Ascending aorta (tissue), 2 donors: ENCODE measurements at regions of chr14 and their contacts with region 1.

Region 1: DNA sequence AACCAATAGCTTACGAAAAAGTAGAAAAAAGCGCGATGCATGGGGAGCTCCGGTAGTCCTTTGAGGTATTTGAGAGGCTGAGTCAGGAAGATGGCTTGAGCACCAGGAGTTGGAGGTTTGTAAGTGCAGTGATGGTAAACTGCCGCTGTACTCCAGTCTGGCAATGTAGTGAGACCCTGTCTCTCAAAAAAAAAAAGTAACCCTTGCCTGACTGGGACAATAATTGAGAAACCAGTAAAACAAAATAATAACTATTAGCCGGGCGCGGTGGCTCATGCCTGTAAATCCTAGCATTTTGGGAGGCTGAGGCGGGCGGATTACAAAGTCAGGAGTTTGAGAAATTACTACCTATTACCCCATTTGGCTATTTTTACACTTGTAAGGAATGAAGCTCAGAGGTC is 632 bp upstream of the ACOT2 start:
- DNase-seq: no peak
- H3K4me3 ChIP-seq: peak overlapping the region; percentile 80 to 83
- H3K27ac ChIP-seq: peak overlapping the region; percentile 91 to 96
- H3K4me1 ChIP-seq: peaks cover 0 to 26% of the 10 kb centered on the region in 2 donors
- H3K27me3 ChIP-seq: no peaks in the 10 kb centered on the region
- CTCF ChIP-seq: peak in 1 of 3 experiments; percentile 7

Region 2: GRCh38 chr14:73503648-73504047 is 64.7 kb before region 1 on chr14:
- intact Hi-C with region 1: loop called (anchors 2 kb)
- DNase-seq: no peak
- H3K4me3 ChIP-seq: no peak overlapping the region
- H3K27ac ChIP-seq: no peak overlapping the region
- H3K4me1 ChIP-seq: no peaks in the 10 kb centered on the region
- H3K27me3 ChIP-seq: no peaks in the 10 kb centered on the region
- CTCF ChIP-seq: no peak

Region 3: DNA sequence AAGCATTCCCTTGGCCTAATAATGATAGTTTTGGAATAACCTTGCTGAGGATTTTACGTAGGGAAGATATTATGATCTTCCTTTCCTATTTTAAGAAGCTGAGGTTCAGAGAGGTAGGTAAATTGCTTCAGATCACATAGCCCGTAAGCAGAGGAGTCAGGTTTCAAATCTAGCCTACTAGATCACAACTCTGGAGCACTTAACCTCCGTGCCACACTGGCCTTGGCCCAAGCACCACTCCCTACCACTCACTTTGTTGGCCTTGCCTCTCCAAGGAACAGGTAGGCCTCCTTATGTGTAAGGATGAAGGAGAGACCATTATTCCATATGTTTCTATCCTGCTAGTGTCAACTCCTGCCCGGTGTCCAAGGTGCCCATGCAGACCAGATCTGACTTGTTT is 43.9 kb before region 1 on chr14:
- intact Hi-C with region 1: loop called (anchors 5 kb)
- DNase-seq: no peak
- H3K4me3 ChIP-seq: no peak overlapping the region
- H3K27ac ChIP-seq: no peak overlapping the region
- H3K4me1 ChIP-seq: no peaks in the 10 kb centered on the region
- H3K27me3 ChIP-seq: no peaks in the 10 kb centered on the region
- CTCF ChIP-seq: no peak

Region 4: DNA sequence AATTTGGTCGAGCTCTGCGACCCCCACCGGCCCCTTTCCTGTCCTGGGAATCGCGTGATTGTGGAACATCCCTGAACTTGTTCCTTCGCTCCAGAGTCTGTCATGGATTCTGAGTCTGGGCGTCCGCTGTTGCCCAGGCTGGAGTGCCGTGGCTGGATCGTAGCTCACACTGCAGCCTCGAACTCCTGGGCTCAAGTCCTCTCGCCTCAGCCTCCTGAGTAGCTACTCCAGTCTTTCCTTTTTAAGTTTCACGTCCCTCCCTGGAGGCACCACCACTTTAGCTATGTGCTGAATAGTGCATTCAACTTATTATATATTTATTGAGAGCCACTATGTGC is 44.6 kb after region 1 on chr14:
- intact Hi-C with region 1: loop called (anchors 2 kb)
- DNase-seq: no peak
- H3K4me3 ChIP-seq: peak overlapping the region; percentile 73 to 80
- H3K27ac ChIP-seq: peak overlapping the region; percentile 85 to 86
- H3K4me1 ChIP-seq: no peaks in the 10 kb centered on the region
- H3K27me3 ChIP-seq: no peaks in the 10 kb centered on the region
- CTCF ChIP-seq: no peak

Region 5: DNA sequence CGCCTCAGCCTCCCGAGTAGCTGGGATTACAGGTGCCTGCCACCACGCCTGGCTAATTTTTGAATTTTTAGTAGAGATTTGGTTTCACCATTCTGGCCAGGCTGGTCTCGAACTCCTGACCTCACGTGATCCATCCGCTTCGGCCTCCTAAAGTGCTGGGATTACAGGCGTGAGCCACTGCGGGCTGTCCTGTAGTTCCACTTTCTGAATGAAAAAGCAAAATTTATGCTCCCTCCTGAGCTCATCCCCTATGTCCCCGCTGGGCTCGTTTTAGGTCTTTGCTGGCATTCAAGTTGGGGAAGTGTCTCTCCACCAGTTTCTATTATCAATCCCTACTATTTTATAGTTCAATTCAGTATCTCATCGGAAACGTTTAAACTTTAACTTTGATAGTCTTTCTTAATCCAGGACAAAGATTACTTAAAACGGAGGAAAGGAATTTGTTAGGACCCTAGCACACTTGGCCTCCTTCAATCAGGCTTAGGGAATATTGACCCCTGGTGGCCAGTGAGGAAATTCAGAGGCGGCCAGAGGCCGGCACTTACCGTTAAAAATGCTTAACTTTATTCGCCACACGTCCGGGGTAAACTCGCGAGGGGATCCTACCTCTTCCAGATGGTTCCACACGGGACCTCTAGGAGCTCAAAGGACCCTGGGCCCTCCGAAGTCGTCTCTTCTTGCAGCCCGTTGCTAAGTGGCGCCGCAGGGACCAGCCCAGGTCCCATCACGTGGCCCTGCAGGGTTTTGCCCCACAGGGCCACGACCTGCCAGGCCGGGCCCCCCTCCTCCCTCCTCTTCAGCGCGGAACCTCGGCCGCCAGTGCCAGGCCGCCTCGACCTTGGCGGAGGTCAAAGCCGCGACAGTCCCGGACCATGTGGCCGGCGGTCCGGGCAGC is 65.0 kb after region 1 on chr14:
- intact Hi-C with region 1: loop called (anchors 2 kb)
- DNase-seq: peak in 1 of 2 donors; percentile 83
- H3K4me3 ChIP-seq: peak overlapping the region; percentile 43 to 82
- H3K27ac ChIP-seq: peak overlapping the region; percentile 30 to 72
- H3K4me1 ChIP-seq: no peaks in the 10 kb centered on the region
- H3K27me3 ChIP-seq: no peaks in the 10 kb centered on the region
- CTCF ChIP-seq: peak; percentile 83 to 87 (median 84)